ENCODE measurements at regions of chr16 and their contacts with region 1.

Region 1: DNA sequence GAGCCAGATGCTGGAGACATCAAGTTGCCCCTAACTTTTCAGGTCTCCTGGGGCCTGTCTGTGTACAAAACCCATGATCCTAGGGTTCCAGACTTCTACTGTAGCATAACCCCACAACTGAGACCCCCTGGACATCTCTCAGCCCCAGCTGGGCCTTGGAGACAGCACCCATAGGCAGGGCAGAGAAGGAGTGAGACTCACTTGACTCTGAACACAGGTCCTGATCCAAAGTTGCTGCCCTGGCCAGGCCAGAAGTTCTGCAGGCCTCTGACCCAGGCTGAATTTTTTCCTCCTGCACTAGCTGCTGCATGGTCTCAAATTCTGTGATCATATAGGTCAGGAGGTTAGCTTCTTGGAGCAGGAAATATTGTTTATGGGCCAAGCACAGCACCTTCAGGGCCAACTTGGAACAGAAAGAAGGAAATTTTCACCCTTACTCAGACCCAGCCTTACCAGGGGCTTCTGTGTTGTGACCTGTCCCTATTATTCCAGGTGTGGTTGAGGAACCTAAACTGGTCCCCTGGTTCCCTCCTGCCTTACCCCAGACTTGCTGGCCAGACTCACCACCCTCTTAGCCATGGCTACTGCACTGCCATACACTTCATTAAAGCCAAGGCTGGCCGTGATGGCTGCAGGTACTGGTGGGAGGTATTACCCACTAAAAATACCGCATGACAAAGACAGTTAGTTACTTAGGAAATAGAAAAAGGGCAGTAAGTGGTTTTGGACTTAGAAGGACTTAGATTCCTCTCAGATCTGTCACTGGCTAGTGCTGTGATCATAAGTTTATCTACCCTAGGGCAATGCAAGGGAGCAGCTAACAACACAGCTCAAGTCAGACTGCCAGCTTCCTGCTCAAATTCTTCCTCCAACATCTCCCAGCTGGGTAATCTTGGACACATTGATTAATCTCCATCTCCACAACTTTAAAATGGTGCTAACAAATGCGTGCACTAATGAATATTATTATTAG is 2180.1 kb downstream of the TP53TG3F start:
- DNase-seq: no peak
- H3K4me3 Mint-ChIP-seq: no peak overlapping the region
- H3K27ac Mint-ChIP-seq: no peak overlapping the region
- H3K4me1 Mint-ChIP-seq: no peaks in the 10 kb centered on the region
- H3K27me3 Mint-ChIP-seq: no peaks in the 10 kb centered on the region

Region 2: GRCh38 chr16:35585411-35585810 is 54.1 kb before region 1 on chr16:
- intact Hi-C with region 1: loop called (anchors 10 kb)
- DNase-seq: no peak
- H3K4me3 Mint-ChIP-seq: no peak overlapping the region
- H3K27ac Mint-ChIP-seq: no peak overlapping the region
- H3K4me1 Mint-ChIP-seq: no peaks in the 10 kb centered on the region
- H3K27me3 Mint-ChIP-seq: no peaks in the 10 kb centered on the region

Region 3: GRCh38 chr16:35664091-35664693 is 24.7 kb after region 1 on chr16:
- intact Hi-C with region 1: no loop called
- DNase-seq: no peak
- H3K4me3 Mint-ChIP-seq: no peak overlapping the region
- H3K27ac Mint-ChIP-seq: no peak overlapping the region
- H3K4me1 Mint-ChIP-seq: no peaks in the 10 kb centered on the region
- H3K27me3 Mint-ChIP-seq: no peaks in the 10 kb centered on the region